ENCODE measurements at regions of chr16 and their contacts with region 1.

Region 1: GRCh38 chr16:87062569-87063442 is 254.4 kb downstream of the C16orf95 start:
- DNase-seq: peak; percentile 62
- ATAC-seq: peak; percentile 99
- H3K4me3 ChIP-seq: peak overlapping the region; percentile 29 to 35
- H3K27ac ChIP-seq: no peak overlapping the region
- H3K4me1 ChIP-seq: peaks cover 0 to 9% of the 10 kb centered on the region in 2 experiments; a peak in 2 of 4 replicates
- H3K27me3 ChIP-seq: no peaks in the 10 kb centered on the region
- CTCF ChIP-seq: peak; percentile 95 to 100 (median 97)
- POLR2A ChIP-seq: no peak
- RAD21 ChIP-seq: peak; percentile 95

Region 2: DNA sequence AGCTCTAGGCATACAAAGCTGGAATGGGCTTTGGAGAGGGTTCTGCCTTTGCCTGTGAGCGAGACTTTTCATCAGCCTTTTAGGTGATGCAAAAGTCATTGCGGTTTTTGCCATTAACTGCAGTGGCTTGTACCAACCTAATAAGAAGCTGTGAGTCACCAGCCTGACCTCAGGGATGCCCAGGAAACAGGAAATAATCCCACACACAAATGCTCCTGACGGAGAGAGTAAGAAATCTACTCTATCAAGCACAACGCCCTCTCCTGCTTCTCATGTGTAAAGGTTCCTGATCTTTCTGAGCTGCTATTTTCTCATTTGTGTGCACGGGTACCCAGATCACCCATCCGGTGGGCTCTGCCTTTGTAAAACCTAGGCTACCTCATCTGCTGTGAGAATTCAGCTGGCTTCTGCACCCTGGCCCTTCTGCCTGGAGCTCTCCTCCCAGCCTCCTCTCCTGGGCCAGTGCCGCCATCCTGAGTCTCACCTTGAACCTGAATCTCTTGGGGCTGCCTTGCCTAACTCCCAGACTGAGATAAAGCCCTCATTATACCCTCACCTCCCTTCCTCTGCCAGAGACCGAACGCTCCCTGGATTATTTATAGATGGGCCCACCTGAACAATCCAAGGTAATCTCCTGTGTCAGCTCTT is 45.3 kb before region 1 on chr16:
- CTCF ChIA-PET with region 1: interaction called, 16 read pairs
- POLR2A ChIA-PET with region 1: no interaction called
- RAD21 ChIA-PET with region 1: no interaction called
- intact Hi-C with region 1: no loop called
- DNase-seq: peak; percentile 80
- ATAC-seq: peak; percentile 92
- H3K4me3 ChIP-seq: no peak overlapping the region
- H3K27ac ChIP-seq: no peak overlapping the region
- H3K4me1 ChIP-seq: peaks cover 3 to 10% of the 10 kb centered on the region in 2 experiments; a peak in 3 of 4 replicates
- H3K27me3 ChIP-seq: no peaks in the 10 kb centered on the region
- CTCF ChIP-seq: peak; percentile 39 to 58 (median 57)
- POLR2A ChIP-seq: no peak
- RAD21 ChIP-seq: peak; percentile 63

Region 3: DNA sequence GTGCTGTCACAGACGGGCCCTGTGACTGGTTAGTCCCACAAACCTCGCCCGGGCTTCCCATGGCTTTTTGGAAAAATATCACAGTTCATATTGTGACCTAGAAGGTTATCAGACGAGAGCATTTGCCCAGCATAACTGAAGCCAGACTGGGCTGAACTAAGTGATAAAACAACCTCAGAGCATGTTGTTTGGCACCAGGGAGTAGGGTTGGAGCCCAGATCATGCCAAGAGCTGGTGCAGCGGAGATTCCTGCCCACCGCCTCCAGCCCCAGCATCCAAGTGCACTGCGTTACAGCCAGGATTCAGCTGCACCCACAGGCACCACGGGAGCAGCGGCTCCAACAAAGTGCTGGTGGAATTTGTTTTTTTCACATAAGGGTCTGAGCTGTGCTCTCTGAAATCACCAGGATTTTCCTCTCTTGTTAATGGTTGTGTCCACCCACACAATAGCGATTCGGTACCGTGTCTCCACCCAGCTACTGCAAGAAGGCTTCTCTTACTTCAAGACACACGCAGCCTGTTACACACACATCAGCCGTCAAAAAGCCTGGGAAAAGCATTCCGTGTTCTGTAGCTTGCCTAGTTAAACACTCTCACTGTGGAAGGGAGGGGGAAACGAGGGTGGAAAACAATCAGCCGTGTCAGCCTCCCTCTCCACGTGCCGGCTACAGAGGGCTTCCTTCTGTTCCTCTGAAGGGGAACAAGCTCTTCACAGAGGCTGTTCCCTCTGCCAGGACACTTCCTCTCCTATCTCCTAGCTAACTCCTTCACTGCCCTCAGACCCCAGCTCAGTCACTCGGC is 19.4 kb before region 1 on chr16:
- CTCF ChIA-PET with region 1: interaction called, 16 read pairs
- POLR2A ChIA-PET with region 1: no interaction called
- RAD21 ChIA-PET with region 1: interaction called in 1 of 2 experiments, 3 read pairs
- intact Hi-C with region 1: no loop called
- DNase-seq: no peak
- ATAC-seq: no peak
- H3K4me3 ChIP-seq: no peak overlapping the region
- H3K27ac ChIP-seq: no peak overlapping the region
- H3K4me1 ChIP-seq: peaks cover 0 to 4% of the 10 kb centered on the region in 2 experiments; a peak in 1 of 4 replicates
- H3K27me3 ChIP-seq: peaks cover 10% of the 10 kb centered on the region
- CTCF ChIP-seq: no peak
- POLR2A ChIP-seq: no peak
- RAD21 ChIP-seq: no peak

Region 4: GRCh38 chr16:87076950-87077749 is 14.3 kb after region 1 on chr16:
- CTCF ChIA-PET with region 1: interaction called, 56 read pairs
- POLR2A ChIA-PET with region 1: interaction called, 4 read pairs
- RAD21 ChIA-PET with region 1: interaction called in 1 of 2 experiments, 4 read pairs
- intact Hi-C with region 1: no loop called
- DNase-seq: peak; percentile 94
- ATAC-seq: peak; percentile 97
- H3K4me3 ChIP-seq: peak overlapping the region; percentile 27 to 42
- H3K27ac ChIP-seq: peak overlapping the region; percentile 40
- H3K4me1 ChIP-seq: peaks cover 7 to 14% of the 10 kb centered on the region in 2 experiments; a peak in 3 of 4 replicates
- H3K27me3 ChIP-seq: no peaks in the 10 kb centered on the region
- CTCF ChIP-seq: peak; percentile 86 to 100 (median 99)
- POLR2A ChIP-seq: no peak
- RAD21 ChIP-seq: peak; percentile 91

Region 5: DNA sequence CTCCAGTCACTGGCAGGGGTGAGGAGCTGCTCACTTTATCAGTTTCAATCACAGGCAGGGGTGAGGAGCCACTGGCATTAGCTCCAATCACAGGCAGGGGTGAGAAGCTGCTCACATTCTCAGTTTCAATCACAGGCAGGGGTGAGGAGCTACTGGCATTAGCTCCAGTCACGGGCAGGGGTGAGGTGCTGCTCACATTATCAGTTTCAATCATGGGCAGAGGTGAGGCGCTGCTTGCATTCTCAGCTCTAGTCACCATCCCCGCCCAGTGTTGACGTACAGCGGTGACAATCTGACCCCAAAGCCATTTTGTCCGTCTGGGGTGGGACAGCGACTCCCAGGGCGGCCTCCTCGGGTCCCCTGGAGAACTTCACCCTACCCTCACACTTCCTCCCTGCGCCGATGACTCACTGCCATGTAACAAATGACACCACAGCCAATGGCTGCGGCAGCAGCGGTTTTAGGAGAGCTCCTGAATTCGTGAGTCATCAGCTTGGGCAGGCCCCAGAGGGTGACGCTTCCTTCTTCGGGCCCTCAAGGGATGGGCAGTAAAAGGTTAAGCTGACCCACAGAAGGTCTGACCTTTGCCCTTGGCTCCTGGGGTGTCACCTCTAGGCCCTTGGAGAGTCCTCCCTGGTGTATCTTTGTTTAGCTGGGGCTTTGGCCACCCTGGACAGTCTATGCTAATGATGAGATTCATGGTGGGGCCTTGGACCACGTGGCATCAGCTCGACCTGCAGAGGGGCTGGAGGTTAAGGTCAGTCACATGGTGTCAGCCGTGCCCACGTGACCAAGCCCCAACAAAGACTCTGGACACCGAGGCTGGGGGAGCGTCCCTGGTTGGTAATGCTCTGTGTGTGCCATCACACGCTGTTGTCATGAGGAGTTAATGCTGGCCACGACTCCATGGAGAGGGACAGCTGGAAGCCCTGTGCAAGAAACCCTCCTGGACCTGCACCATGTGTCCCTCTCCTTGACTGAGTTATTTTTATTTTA is 82.7 kb after region 1 on chr16:
- CTCF ChIA-PET with region 1: interaction called, 13 read pairs
- POLR2A ChIA-PET with region 1: no interaction called
- RAD21 ChIA-PET with region 1: no interaction called
- intact Hi-C with region 1: no loop called
- DNase-seq: peak; percentile 97
- ATAC-seq: peak; percentile 94
- H3K4me3 ChIP-seq: peak overlapping the region; percentile 24 to 40
- H3K27ac ChIP-seq: peak overlapping the region; percentile 41
- H3K4me1 ChIP-seq: peaks cover 13 to 34% of the 10 kb centered on the region in 2 experiments
- H3K27me3 ChIP-seq: no peaks in the 10 kb centered on the region
- CTCF ChIP-seq: peak in 2 of 3 experiments; percentile 43 to 48; a peak in 5 of 6 replicates
- POLR2A ChIP-seq: peak; percentile 41
- RAD21 ChIP-seq: peak; percentile 40

Region 6: DNA sequence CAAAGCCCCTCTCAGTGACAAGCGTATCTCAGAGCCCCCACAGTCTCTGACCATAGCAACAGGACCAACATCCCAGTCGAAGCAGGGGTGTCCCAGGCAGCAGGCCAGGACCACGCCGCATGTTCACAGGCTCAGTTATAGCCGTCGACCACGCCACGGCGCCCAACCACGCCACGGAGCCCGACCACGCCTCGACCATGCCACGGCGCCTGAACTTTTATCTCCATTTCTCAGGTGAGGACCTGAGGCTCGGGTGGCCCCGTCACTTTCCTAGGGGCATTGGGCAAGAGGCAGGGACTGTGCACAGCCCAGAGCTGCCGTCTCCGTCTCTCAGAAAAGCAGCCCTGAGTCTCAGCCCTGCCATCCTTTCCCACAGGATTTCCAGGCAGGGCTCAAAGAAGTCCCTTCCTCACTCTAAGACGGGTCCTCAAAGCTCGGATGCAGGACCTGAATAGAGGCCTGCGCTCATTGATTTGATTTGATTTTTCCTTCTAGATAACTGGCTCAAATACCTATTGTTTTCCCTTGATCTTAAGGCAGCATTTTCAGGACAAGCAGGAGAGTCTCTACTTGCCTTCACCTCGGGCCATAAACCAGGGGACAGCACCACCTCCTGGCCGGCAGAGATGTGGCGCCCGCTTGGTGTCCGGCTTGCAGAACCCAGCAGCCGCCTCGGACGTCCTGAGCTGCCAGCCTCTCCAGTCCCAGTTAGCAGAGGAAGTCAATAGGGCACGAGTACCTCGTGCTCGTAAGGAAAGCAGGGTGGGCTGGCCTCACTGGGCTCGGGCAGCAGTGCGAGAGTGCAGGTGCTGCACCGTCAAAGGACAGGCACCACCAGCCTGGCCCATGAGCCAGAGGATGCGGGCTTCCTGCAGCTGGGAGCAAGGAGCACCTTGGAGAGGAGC is 215.6 kb after region 1 on chr16:
- CTCF ChIA-PET with region 1: interaction called, 6 read pairs
- POLR2A ChIA-PET with region 1: no interaction called
- RAD21 ChIA-PET with region 1: no interaction called
- intact Hi-C with region 1: loop called (anchors 5 kb)
- DNase-seq: peak; percentile 52
- ATAC-seq: peak; percentile 99
- H3K4me3 ChIP-seq: no peak overlapping the region
- H3K27ac ChIP-seq: no peak overlapping the region
- H3K4me1 ChIP-seq: peaks cover 0 to 8% of the 10 kb centered on the region in 2 experiments; a peak in 1 of 4 replicates
- H3K27me3 ChIP-seq: no peaks in the 10 kb centered on the region
- CTCF ChIP-seq: peak; percentile 97 to 99 (median 97)
- POLR2A ChIP-seq: no peak
- RAD21 ChIP-seq: peak; percentile 99

Measured in HCT116 (cell line).